ENCODE measurements at regions of chr1 and their contacts with region 1.

Region 1: GRCh38 chr1:147172168-147172992 is at the start of gene PRKAB2:
- DNase-seq: peak; percentile 94
- ATAC-seq: peak; percentile 92
- H3K4me3 Mint-ChIP-seq: peak within 1 kb of the TSS; percentile 95
- H3K27ac Mint-ChIP-seq: peak within 1 kb of the TSS; percentile 96
- H3K4me1 Mint-ChIP-seq: peaks cover 29% of the 10 kb centered on the region
- H3K27me3 Mint-ChIP-seq: no peaks in the 10 kb centered on the region
- total RNA-seq, gene PRKAB2: 4.8 to 7.0 TPM

Region 2: DNA sequence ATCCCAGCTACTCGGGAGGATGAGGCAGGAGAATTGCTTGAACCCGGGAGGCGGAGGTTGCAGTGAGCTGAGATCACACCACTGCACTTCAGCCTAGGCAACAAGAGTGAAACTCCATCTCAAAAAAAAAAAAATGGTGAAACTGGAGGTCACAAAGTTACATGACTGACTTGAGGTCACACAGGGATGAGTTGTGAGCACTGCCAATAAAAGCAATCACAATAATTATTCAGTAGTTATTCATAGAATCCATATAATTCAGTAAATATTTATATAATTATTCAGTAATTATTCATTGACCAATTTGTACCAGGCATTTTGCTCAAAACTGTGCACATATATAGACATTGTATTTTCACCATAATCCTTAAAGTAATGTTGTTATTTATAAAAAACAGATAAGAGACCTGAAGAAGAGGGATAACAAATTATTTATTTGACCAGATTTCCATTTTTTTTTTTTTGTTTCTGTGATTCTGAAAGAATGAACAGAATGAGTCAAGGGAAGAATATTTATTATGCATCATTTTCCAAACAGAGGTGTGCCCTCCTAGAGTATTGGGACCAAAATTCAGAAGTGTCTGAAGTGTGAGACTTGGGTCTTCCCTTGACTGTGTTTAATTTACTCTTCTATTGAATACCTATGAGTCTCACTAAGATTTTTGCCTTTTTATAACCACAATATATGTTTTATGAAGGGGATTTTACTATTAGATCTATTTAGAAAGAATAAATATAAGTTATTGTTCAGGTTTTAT is 43.1 kb before region 1 on chr1:
- CTCF ChIA-PET with region 1: no interaction called
- POLR2A ChIA-PET with region 1: no interaction called
- intact Hi-C with region 1: no loop called
- DNase-seq: no peak
- ATAC-seq: no peak
- H3K4me3 Mint-ChIP-seq: no peak overlapping the region
- H3K27ac Mint-ChIP-seq: no peak overlapping the region
- H3K4me1 Mint-ChIP-seq: no peaks in the 10 kb centered on the region
- H3K27me3 Mint-ChIP-seq: peaks cover 14% of the 10 kb centered on the region

Region 3: DNA sequence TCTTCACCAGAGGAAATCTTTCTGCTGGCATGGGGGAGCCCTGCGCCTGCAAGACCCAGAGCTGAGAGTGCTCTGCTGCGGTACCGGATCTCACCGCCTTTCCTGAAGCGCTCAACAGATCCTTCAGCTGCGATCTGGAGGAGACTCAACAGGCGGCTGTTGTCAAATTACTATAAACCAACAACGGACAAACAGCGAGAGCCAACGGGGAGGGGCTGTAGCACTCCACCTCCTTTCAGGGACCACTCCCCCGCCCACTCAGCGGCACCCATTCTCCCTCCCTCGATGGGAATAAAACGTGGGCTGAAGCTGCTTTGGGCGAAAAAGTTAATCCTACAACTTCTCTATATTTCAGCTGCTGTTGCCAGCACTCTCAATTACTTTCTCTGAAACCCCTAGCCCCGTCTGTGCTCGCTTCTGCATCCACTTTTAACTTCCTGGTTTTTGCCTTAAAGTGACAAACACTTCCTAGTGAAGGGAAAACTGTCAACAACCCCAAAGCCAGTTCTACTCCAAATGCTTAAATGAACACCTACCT is 52.9 kb after region 1 on chr1 and contains the start of gene FMO5:
- CTCF ChIA-PET with region 1: interaction called, 4 read pairs
- POLR2A ChIA-PET with region 1: no interaction called
- intact Hi-C with region 1: loop called in 1 of 2 experiments (anchors 1 kb)
- DNase-seq: peak; percentile 69
- ATAC-seq: peak; percentile 97
- H3K4me3 Mint-ChIP-seq: peak within 1 kb of the TSS; percentile 81
- H3K27ac Mint-ChIP-seq: peak within 1 kb of the TSS; percentile 82
- H3K4me1 Mint-ChIP-seq: peaks cover 17% of the 10 kb centered on the region
- H3K27me3 Mint-ChIP-seq: no peaks in the 10 kb centered on the region
- total RNA-seq, gene FMO5: 0.37 to 0.53 TPM

Region 4: DNA sequence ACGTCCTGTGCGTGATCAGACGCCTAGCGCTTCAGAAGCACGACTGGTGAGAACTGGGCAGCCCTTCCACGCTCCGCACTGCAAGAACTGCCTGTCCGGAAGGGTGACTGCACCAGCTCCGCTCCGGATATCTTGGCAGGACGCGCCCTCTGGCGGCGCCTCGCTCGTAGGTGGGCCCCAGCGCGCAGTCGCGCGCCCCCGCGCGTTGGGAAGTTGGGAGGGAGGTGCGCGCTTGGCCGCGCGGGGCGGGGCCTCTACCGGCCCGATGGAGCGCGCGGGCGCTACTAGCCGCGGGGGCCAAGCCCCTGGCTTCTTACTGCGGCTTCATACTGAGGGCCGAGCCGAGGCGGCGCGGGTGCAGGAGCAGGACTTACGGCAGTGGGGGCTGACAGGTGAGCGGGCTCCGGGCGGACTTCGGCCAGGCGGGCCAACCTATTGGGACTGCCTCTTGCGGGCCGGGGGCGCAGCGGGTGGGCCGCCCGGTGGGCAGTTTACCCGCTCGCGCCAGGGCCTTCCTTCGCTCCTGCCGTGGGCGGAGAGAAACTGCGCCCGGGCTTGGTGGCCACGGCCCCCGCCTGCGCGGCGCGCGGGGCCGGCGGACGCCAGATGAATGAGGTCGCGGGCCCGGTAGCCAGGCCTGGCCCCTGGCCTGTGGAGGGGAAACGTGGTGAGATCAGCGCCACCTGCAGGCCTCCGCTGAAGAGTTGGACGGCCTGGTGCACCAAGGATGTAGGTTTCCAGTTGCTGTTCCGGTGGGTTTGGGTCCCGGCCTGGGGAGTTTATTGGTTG is 70.3 kb after region 1 on chr1 and contains the start of gene CHD1L:
- CTCF ChIA-PET with region 1: interaction called, 25 read pairs
- POLR2A ChIA-PET with region 1: interaction called, 13 read pairs
- intact Hi-C with region 1: loop called (anchors 1 kb)
- DNase-seq: peak; percentile 97
- ATAC-seq: peak; percentile 88
- H3K4me3 Mint-ChIP-seq: peak within 1 kb of the TSS; percentile 94
- H3K27ac Mint-ChIP-seq: peak within 1 kb of the TSS; percentile 77
- H3K4me1 Mint-ChIP-seq: peaks cover 36% of the 10 kb centered on the region
- H3K27me3 Mint-ChIP-seq: no peaks in the 10 kb centered on the region
- total RNA-seq, gene CHD1L: 56.1 to 69.2 TPM

Region 5: GRCh38 chr1:147545133-147545532 is 372.8 kb after region 1 on chr1:
- CTCF ChIA-PET with region 1: interaction called, 3 read pairs
- POLR2A ChIA-PET with region 1: no interaction called
- intact Hi-C with region 1: loop called in 1 of 2 experiments (anchors 5 kb)
- DNase-seq: peak; percentile 95
- ATAC-seq: peak; percentile 77
- H3K4me3 Mint-ChIP-seq: peak overlapping the region; percentile 13
- H3K27ac Mint-ChIP-seq: peak overlapping the region; percentile 68
- H3K4me1 Mint-ChIP-seq: peaks cover 70% of the 10 kb centered on the region
- H3K27me3 Mint-ChIP-seq: no peaks in the 10 kb centered on the region

Region 6: GRCh38 chr1:147670317-147671041 is 498.1 kb after region 1 on chr1 and contains the start of gene ACP6:
- CTCF ChIA-PET with region 1: no interaction called
- POLR2A ChIA-PET with region 1: no interaction called
- intact Hi-C with region 1: loop called in 1 of 2 experiments (anchors 1 kb)
- DNase-seq: peak; percentile 94
- ATAC-seq: peak; percentile 97
- H3K4me3 Mint-ChIP-seq: peak within 1 kb of the TSS; percentile 86
- H3K27ac Mint-ChIP-seq: peak within 1 kb of the TSS; percentile 88
- H3K4me1 Mint-ChIP-seq: peaks cover 17% of the 10 kb centered on the region
- H3K27me3 Mint-ChIP-seq: peaks cover 6% of the 10 kb centered on the region
- total RNA-seq, gene ACP6: 11.1 to 11.7 TPM